Naive thymus-derived CD4-positive, alpha-beta T cell (primary cell): ENCODE measurements at regions of chr12 and their contacts with region 1.

Region 1: GRCh38 chr12:125544960-125545359 is 479.7 kb downstream of the AACS start:
- DNase-seq: no peak
- ATAC-seq: no peak
- H3K4me3 ChIP-seq: no peak overlapping the region
- H3K4me3 Mint-ChIP-seq: no peak overlapping the region
- H3K27ac ChIP-seq: no peak overlapping the region
- H3K27ac Mint-ChIP-seq: no peak overlapping the region
- H3K4me1 ChIP-seq: no peaks in the 10 kb centered on the region
- H3K4me1 Mint-ChIP-seq: no peaks in the 10 kb centered on the region
- H3K27me3 ChIP-seq: no peaks in the 10 kb centered on the region
- H3K27me3 Mint-ChIP-seq: peaks cover 0 to 28% (median 4%) of the 10 kb centered on the region in 5 donors

Region 2: GRCh38 chr12:125512541-125513298 is 32.2 kb before region 1 on chr12:
- CTCF ChIA-PET with region 1: no interaction called
- POLR2A ChIA-PET with region 1: no interaction called
- intact Hi-C with region 1: loop called in 1 of 2 experiments (anchors 2 kb)
- DNase-seq: no peak
- ATAC-seq: no peak
- H3K4me3 ChIP-seq: no peak overlapping the region
- H3K4me3 Mint-ChIP-seq: no peak overlapping the region
- H3K27ac ChIP-seq: no peak overlapping the region
- H3K27ac Mint-ChIP-seq: no peak overlapping the region
- H3K4me1 ChIP-seq: no peaks in the 10 kb centered on the region
- H3K4me1 Mint-ChIP-seq: peaks cover 0 to under 1% (median 0%) of the 10 kb centered on the region in 7 donors
- H3K27me3 ChIP-seq: peaks cover 0 to 3% of the 10 kb centered on the region in 2 donors
- H3K27me3 Mint-ChIP-seq: peaks cover 0 to 5% (median 0%) of the 10 kb centered on the region in 5 donors

Region 3: DNA sequence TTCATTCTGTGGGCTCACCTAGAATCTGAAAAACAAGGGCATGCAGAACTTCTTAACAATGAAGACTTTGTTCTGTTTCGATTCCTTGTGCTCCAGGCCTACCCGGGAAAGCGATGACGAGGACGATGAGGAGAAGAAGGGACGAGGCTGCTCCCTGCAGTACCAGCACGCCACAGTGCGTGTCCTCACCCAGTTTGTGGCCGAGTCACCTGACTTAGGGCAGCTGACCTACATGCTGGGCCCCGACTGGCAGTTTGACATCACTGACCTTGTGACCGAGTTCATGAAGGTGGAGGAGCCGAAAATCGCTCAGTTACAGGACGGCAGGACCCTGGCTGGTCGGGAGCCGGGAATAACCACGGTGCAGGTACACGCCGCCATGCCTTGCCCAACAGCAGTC is 105.6 kb after region 1 on chr12:
- CTCF ChIA-PET with region 1: no interaction called
- POLR2A ChIA-PET with region 1: no interaction called
- intact Hi-C with region 1: no loop called
- DNase-seq: no peak
- ATAC-seq: no peak
- H3K4me3 ChIP-seq: no peak overlapping the region
- H3K4me3 Mint-ChIP-seq: no peak overlapping the region
- H3K27ac ChIP-seq: no peak overlapping the region
- H3K27ac Mint-ChIP-seq: no peak overlapping the region
- H3K4me1 ChIP-seq: no peaks in the 10 kb centered on the region
- H3K4me1 Mint-ChIP-seq: peaks cover 0 to 1% (median 0%) of the 10 kb centered on the region in 7 donors
- H3K27me3 ChIP-seq: no peaks in the 10 kb centered on the region
- H3K27me3 Mint-ChIP-seq: peaks cover 0 to 8% (median 0%) of the 10 kb centered on the region in 5 donors